ENCODE measurements at regions of chr17 and their contacts with region 1.

Region 1: GRCh38 chr17:37609170-37610040 is at the start of gene SYNRG:
- DNase-seq: peak; percentile 92
- H3K4me3 Mint-ChIP-seq: peak within 1 kb of the TSS; percentile 90
- H3K27ac Mint-ChIP-seq: peak within 1 kb of the TSS; percentile 88
- H3K4me1 Mint-ChIP-seq: peaks cover 31% of the 10 kb centered on the region
- H3K27me3 Mint-ChIP-seq: no peaks in the 10 kb centered on the region
- total RNA-seq, gene SYNRG: 38.1 and 43.7 TPM in 2 replicates

Region 2: DNA sequence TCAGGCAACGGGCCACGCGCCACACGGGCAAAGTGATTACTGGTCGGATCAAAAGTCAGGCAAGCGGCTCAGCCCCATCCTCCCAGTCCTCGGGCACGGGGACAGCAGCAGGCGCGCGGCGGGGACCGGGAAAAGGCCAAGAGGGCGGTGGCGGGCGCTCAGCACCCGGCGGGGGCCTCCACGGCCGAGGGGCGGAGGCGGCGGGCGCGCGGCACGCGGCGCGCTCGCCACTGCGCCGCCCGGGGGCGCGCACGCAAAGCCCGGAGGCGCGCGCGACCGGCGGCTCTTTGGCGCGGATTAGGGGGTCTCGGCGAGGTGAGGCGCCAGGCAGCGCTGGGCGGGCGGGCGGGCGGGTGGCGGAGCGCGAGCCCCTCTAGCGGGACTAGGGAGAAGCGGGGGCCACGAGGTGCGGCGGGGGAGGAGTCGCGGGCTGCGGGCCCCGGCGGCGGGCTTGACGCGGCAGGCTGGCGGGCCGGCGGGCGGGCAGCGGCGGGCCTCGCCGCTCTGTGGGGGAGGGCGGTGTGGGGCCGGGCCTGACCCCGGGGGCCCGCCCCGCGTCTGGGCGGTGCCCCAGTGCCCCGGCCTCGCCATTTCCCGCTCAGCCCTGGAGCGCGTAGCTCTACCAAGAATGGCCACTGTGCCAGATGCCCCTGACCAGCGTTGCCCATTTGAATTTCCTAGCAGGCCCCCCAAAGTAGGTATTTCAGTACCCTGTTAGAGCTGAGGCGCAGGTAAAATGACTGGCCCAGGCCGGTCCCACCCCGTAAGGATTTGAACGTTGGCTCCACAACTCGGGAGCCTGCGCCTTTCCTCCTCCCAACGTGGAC is 202.6 kb before region 1 on chr17 and contains the starts of genes ACACA and TADA2A:
- intact Hi-C with region 1: loop called (anchors 10 kb)
- DNase-seq: peak; percentile 74
- H3K4me3 Mint-ChIP-seq: peak within 1 kb of the TSS; percentile 97
- H3K27ac Mint-ChIP-seq: peak within 1 kb of the TSS; percentile 94
- H3K4me1 Mint-ChIP-seq: peaks cover 42% of the 10 kb centered on the region
- H3K27me3 Mint-ChIP-seq: no peaks in the 10 kb centered on the region
- total RNA-seq, gene ACACA: 109 and 110 TPM in 2 replicates
- total RNA-seq, gene TADA2A: 34.3 and 34.6 TPM in 2 replicates

Region 3: DNA sequence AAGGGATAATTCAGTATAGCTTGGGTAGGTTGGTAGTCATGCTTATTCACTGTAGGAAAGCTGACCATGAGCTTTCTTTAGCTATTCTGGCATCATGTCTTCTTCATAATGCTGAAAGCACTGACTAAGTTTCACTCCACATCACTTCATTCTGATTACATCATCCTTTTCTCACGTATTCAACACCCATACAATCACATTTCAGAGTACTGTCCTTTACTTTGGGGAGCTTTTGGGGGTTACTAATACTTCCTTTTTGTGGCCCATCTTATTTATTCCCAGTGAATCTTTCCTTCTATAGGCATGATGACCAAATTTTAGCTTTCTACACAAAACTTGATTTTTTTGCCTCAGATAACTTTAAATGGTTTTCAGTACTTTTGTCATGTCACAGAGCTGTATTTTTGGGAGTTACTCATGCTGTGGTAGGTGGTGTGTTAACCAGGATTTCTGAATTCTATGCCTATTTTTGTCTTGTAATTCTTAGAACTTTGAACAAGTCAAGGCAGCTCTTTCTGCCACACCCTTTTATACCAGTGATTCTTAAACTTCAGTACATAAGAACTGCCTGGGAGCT is 179.3 kb before region 1 on chr17:
- intact Hi-C with region 1: loop called (anchors 5 kb)
- DNase-seq: no peak
- H3K4me3 Mint-ChIP-seq: peak overlapping the region; percentile 51
- H3K27ac Mint-ChIP-seq: peak overlapping the region; percentile 92
- H3K4me1 Mint-ChIP-seq: peaks cover 24% of the 10 kb centered on the region
- H3K27me3 Mint-ChIP-seq: no peaks in the 10 kb centered on the region

Region 4: GRCh38 chr17:37489197-37490001 is 120.0 kb before region 1 on chr17 and contains the start of gene DUSP14:
- intact Hi-C with region 1: loop called (anchors 5 kb)
- DNase-seq: peak; percentile 77
- H3K4me3 Mint-ChIP-seq: peak within 1 kb of the TSS; percentile 92
- H3K27ac Mint-ChIP-seq: peak within 1 kb of the TSS; percentile 94
- H3K4me1 Mint-ChIP-seq: peaks cover 40% of the 10 kb centered on the region
- H3K27me3 Mint-ChIP-seq: no peaks in the 10 kb centered on the region
- total RNA-seq, gene DUSP14: 19.5 and 21.0 TPM in 2 replicates

Region 5: GRCh38 chr17:37506678-37507077 is 102.7 kb before region 1 on chr17:
- intact Hi-C with region 1: no loop called
- DNase-seq: no peak
- H3K4me3 Mint-ChIP-seq: no peak overlapping the region
- H3K27ac Mint-ChIP-seq: no peak overlapping the region
- H3K4me1 Mint-ChIP-seq: peaks cover 12% of the 10 kb centered on the region
- H3K27me3 Mint-ChIP-seq: no peaks in the 10 kb centered on the region

Region 6: GRCh38 chr17:37592291-37592690 is 17.1 kb before region 1 on chr17:
- intact Hi-C with region 1: loop called (anchors 2 kb)
- DNase-seq: no peak
- H3K4me3 Mint-ChIP-seq: no peak overlapping the region
- H3K27ac Mint-ChIP-seq: no peak overlapping the region
- H3K4me1 Mint-ChIP-seq: peaks cover 21% of the 10 kb centered on the region
- H3K27me3 Mint-ChIP-seq: no peaks in the 10 kb centered on the region

Region 7: DNA sequence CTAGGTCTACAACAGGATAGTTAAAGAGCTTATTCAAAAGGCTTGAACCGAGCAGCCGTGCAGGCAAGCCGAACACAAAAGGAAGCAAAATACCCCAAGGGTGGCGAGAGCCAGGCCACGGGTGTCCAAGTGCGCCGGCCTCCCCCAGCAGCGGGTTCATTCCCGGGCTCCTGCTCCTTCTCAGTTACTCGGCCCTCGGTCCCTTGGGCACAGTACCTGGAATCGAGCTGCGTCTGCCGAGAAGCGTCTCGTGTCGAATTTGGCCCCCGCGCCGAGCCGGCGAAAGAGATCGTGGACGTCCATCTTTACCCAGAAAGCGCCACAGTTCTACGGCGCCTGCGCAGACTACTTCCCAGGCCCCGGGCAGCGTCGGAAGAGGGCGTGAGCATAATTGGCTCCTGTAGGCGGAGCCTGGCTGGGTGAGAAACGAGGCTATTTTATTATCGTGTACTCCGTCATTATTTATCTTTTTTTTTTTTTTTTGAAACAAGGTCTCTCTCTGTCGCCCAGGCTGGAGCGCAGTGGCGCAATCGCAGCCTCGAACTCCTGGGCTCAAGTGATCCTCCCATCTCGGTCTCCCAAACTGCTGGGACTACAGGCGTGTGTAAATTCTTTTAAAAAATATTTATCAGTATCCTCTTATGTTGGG is 33.8 kb after region 1 on chr17 and contains the start of gene DDX52:
- intact Hi-C with region 1: loop called (anchors 1 kb)
- DNase-seq: peak; percentile 84
- H3K4me3 Mint-ChIP-seq: peak within 1 kb of the TSS; percentile 93
- H3K27ac Mint-ChIP-seq: peak within 1 kb of the TSS; percentile 84
- H3K4me1 Mint-ChIP-seq: peaks cover 22% of the 10 kb centered on the region
- H3K27me3 Mint-ChIP-seq: peaks cover 40% of the 10 kb centered on the region
- total RNA-seq, gene DDX52: 43.4 and 46.9 TPM in 2 replicates

Region 8: GRCh38 chr17:37761059-37761458 is 151.7 kb after region 1 on chr17:
- intact Hi-C with region 1: loop called (anchors 5 kb)
- DNase-seq: no peak
- H3K4me3 Mint-ChIP-seq: no peak overlapping the region
- H3K27ac Mint-ChIP-seq: peak overlapping the region; percentile 67
- H3K4me1 Mint-ChIP-seq: peaks cover 52% of the 10 kb centered on the region
- H3K27me3 Mint-ChIP-seq: no peaks in the 10 kb centered on the region